ENCODE measurements at regions of chr11 and their contacts with region 1.

Region 1: DNA sequence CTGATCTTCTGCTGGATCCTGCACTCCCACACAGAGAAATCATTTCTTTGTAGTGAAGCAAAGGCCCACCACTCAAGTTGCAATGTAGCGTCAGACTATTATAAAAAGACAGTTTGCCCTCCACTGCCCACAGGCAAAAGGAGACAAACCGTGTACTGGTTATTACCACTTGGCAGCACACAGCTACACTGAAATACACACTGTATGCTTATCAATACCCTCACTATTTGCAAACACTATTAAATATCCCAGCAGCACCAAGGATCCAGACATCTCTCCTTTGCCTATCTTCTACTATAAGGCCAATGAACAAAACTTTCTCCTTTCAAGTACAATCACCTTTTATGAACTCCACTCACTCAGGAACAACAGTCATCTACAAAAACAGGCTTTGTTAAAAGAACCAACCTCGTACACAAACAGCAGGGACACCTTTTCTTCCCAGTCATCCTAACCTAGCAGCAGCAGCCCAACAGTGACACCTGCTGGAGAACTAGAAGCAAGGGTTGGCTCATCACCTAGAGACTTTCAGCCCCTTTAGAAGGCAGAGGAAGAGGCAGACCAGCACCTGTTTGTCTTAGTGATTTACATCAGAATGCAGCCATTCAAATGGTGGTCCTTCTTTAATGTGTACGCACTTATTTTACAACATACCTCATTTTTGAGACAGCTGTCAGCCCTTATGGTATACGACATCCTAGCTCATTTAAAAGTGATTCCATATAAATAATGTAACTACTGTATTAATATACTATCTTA is 56.1 kb downstream of the AMBRA1 start:
- DNase-seq: peak; percentile 75
- H3K4me3 ChIP-seq: no peak overlapping the region
- H3K27ac ChIP-seq: no peak overlapping the region
- H3K4me1 ChIP-seq: peaks cover 0 to 6% (median 0%) of the 10 kb centered on the region in 4 donors
- H3K27me3 ChIP-seq: no peaks in the 10 kb centered on the region
- CTCF ChIP-seq: peak; percentile 22 to 74 (median 72)
- EP300 ChIP-seq: no peak
- POLR2A ChIP-seq: no peak

Region 2: GRCh38 chr11:46389450-46390253 is 148.1 kb before region 1 on chr11:
- intact Hi-C with region 1: loop called (anchors 5 kb)
- DNase-seq: peak; percentile 74
- H3K4me3 ChIP-seq: peak overlapping the region in 3 of 4 donors; percentile 26 to 49 (median 46)
- H3K27ac ChIP-seq: no peak overlapping the region
- H3K4me1 ChIP-seq: peaks cover 0 to 42% (median 40%) of the 10 kb centered on the region in 4 donors
- H3K27me3 ChIP-seq: peaks cover 35 to 82% (median 57%) of the 10 kb centered on the region in 3 donors
- CTCF ChIP-seq: peak; percentile 17 to 78 (median 60)
- EP300 ChIP-seq: no peak
- POLR2A ChIP-seq: no peak

Region 3: DNA sequence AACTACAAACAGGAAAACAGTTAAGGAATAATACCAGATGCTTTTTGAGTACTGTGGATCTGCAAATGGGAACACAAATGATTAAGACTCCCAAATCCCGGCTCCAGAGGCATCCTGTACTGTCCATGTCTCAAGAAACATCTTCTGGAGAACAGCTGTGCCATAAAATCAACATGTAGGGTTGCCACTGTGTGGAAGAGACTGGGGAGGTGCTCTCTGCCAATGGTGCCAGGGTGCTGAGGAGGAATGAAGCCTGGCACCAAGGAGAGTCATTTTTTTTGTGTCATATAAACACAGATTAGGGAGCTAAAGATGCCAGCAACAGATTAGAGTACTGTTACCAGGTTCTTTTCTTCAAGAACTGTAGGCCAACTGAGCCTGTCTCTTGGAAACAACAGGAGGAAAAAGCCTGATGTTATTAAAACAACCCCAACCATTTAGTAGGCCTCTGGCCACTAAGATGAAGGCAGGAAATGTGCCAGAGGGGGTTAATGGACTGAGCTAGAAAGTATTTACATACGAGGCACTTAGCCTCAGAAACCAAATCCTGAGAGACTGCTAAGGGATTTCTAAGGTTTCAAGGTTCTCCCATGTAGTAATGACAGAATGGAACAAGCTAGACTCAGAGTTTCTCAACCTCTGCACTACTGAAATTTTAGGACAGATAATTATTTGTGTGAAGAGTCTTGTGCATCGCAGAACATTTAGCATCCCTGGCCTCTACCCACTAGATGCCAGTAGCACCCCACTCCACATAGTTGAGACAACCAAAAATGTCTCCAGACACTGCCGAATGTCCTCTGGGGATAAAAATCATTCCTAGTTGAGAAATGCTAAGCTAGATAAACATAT is 91.6 kb before region 1 on chr11:
- intact Hi-C with region 1: loop called (anchors 5 kb)
- DNase-seq: no peak
- H3K4me3 ChIP-seq: no peak overlapping the region
- H3K27ac ChIP-seq: peak overlapping the region in 2 of 4 donors; percentile 23 to 32
- H3K4me1 ChIP-seq: peaks cover 0 to 34% (median 22%) of the 10 kb centered on the region in 4 donors
- H3K27me3 ChIP-seq: no peaks in the 10 kb centered on the region
- CTCF ChIP-seq: no peak
- EP300 ChIP-seq: no peak
- POLR2A ChIP-seq: no peak

Region 4: GRCh38 chr11:46472670-46472994 is 65.1 kb before region 1 on chr11:
- intact Hi-C with region 1: no loop called
- DNase-seq: no peak
- H3K4me3 ChIP-seq: no peak overlapping the region
- H3K27ac ChIP-seq: no peak overlapping the region
- H3K4me1 ChIP-seq: peaks cover 0 to 6% (median 0%) of the 10 kb centered on the region in 4 donors
- H3K27me3 ChIP-seq: no peaks in the 10 kb centered on the region
- CTCF ChIP-seq: no peak
- EP300 ChIP-seq: no peak
- POLR2A ChIP-seq: no peak

Region 5: DNA sequence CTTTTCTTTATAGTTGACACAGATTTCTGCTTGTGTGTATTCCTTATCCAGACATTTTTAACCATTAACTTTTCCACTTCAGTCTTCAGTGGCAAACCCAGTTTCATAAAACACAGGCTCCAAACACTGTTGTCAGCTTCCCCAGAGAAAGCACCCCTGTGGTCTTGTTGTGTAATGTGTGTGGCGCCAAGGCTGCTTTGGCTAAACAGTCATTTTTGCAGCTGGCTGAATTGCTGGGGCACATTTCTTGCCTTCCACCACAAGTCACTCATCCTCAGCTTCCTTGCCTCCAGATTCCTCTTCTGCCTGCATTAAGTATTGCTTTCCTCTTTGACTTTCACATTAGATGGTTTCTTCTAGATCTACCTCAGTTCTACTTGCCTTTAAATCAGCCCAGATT is 122.2 kb after region 1 on chr11:
- intact Hi-C with region 1: no loop called
- DNase-seq: peak; percentile 55
- H3K4me3 ChIP-seq: no peak overlapping the region
- H3K27ac ChIP-seq: no peak overlapping the region
- H3K4me1 ChIP-seq: no peaks in the 10 kb centered on the region
- H3K27me3 ChIP-seq: no peaks in the 10 kb centered on the region
- CTCF ChIP-seq: no peak
- EP300 ChIP-seq: no peak
- POLR2A ChIP-seq: no peak

Measured in sigmoid colon (tissue), 7 donors.